ENCODE measurements at regions of chr6 and their contacts with region 1.

Region 1: DNA sequence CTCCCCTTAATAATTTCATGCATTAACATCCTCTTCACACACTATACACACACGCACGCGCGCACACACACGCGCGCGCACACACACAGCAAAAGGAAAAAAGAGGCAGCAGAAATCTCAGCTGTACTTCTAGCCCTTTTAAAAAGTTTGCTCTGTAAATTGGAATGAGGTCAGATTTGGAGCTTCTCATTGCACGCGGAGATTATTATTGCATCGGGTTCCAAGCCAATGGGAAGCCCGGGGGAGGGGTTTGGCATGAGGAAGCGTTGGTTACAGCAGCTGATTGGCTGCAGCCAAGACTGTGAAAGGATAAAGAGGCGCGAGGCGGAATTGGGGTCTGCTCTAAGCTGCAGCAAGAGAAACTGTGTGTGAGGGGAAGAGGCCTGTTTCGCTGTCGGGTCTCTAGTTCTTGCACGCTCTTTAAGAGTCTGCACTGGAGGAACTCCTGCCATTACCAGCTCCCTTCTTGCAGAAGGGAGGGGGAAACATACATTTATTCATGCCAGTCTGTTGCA is at the start of gene SOX4:
- DNase-seq: peak; percentile 79 to 97 (median 86)

Region 2: DNA sequence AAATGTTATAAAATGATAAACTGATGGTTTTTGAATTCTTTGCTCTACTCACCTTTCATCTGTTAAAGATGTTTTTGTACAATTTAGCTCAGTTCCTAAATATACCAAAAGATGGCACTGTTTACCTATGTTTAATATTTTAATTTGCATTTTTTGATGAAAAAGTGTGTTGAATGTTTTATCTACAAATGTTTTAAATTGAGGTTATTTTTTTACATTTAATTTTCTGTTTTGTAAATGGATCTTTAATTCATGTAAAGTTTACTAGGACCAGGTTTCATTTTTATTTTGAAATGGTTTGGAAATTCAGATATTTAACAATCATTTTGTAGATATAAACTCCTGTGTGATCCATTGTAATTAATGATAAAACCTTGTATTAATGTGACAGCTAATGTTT is 1029.2 kb before region 1 on chr6:
- intact Hi-C with region 1: loop called (anchors 1 kb)
- DNase-seq: no peak

Region 3: GRCh38 chr6:20791944-20792343 is 801.5 kb before region 1 on chr6:
- intact Hi-C with region 1: loop called (anchors 5 kb)
- DNase-seq: no peak

Region 4: DNA sequence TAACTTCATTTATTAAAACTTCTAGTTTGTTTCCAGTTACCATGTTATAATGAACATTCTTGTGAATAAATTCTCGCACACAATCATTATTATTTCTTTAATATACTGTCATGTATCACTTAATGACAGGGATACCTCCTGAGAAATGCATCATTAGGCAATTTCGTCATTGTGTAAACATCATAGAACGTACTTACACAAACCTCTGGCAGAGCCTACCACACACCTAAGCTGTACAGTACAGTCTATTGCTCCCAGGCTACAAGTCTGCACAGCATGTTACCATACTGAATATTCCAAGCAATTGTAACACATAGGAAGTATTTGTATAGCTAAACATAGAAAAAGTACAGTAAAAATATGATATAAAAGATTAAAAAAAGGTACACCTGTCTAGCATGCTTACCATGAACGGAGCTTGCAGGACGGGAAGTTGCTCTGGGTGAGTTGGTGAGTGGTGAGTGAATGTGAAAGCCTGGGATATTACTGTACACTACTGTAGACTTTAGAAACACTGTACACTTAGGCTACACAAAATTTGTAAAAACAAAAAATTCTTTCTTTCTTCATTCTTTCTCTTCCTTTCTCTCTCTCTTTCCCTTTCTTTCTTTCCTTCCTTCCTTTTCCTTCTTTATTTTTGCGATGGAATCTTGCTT is 268.1 kb before region 1 on chr6:
- intact Hi-C with region 1: no loop called
- DNase-seq: no peak

Region 5: DNA sequence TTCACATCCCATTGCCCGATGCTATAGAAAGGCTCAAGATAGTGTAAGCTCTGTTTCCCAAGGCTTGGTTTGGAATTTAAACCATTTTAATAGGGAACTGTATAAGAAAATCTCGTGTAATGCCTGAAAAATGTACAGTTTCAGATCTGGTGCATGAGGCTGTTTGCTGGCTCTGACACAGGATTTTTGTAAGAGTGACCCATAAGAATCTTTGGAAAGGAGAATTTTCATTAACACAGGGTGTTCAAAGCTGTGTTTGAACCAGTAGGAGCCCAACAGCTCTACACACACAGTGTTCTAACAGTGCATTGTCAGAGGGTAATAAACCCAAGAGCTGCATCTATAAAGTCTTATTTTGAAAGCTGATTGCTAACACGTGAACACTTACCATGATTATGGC is 409.8 kb after region 1 on chr6:
- intact Hi-C with region 1: no loop called
- DNase-seq: no peak

Region 6: DNA sequence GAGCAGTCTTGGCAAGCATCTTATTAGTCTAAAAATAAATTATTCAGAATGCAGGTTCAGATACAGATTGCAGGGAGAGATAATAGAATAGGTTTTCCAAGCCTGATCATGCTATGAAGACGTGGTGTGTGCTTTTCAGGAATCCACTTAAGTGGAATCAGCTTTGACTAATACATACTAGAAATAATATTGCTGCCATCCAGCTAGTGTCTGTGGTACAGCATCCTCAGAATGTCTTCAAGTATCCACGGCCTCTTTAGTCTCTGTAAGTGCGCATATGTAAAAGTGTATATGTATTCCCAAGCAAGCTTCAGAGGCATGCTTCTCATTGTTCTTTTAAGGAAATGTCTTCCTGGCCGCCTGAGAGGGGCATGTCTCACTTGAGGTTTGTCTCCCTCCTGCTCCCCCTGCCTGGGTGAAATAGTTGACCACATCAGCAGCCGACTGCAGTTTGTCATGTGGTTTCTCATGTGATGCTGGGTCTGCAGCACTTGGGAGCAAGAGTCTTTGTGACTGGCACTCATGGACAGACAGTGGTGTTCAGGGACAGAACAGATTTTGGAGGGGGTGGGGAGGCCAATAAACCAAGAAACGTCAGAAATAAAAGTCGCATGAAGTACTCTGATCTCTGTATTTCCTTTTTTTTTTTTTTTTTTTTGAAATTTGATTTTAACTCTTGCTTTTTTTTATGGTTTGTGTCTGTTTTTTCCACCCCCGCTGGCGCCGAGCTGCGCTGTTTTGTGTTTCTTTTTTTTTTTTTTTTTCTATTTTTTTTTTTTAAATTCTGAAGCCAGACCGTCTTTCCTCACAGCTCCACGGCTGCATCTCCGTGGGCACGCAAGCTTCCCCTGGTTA is 552.6 kb after region 1 on chr6:
- intact Hi-C with region 1: loop called (anchors 2 kb)
- DNase-seq: peak; percentile 73 to 96 (median 80)

Region 7: DNA sequence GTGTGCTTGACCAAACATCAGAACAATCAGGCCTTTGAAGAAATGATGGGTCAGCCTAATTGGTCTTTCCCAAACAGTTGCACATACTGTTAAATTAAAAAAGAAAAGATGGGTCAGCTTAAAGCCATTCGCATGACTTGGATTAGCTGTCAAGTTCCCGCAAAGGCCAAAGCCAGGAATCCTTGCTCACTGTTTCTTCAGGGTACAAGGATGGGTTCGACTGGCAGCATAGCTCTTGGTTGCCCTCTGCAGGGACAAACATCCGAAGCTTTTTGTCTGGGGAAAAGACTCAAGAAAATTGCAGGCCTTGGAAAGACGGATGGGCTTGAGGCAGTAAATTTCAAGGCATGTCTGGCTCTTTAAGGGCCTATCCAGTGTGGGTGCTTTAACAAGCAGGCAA is 1143.9 kb after region 1 on chr6:
- intact Hi-C with region 1: loop called (anchors 5 kb)
- DNase-seq: peak in 9 of 10 donors; percentile 10 to 86 (median 56)

Region 8: DNA sequence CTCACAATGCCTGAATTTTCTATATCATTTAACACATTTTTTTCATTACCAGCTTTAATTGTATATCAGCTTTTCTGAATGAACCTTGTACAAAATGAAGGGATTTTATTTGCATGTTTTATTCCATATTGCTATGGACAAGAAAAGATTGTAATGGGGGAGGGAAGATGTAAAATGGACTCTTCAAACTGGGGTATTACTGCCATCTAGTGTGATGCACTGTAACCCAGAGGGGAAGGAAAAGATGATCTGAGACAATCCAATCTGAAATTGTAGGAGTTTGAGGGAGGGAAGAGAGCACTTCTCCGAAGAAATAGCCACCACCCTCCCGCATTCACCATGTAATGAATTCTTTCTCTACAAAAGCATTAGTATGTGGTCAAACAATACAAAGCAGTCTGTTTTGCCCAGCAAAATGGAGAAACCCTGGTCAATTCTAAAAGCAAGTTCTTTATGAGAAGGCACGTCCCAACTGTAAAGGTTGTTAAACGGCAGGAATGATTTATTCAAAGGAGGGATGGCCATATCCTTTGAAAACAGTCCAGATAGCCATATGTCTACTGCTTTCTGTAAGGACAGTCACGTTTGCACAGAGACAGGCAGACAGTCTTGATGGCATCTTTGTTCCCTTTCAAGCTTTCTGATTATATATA is 1853.1 kb after region 1 on chr6:
- intact Hi-C with region 1: loop called (anchors 10 kb)
- DNase-seq: no peak

Measured in posterior cingulate gyrus (tissue), 11 donors.